Gastrocnemius medialis (tissue), 4 donors: ENCODE measurements at regions of chr12 and their contacts with region 1.

Region 1: GRCh38 chr12:51341259-51342007 is 5.0 kb downstream of the CELA1 start:
- DNase-seq: peak; percentile 35 to 57
- ATAC-seq: peak; percentile 87 to 89
- H3K4me3 ChIP-seq: peak overlapping the region in 3 of 4 donors; percentile 22 to 34 (median 34)
- H3K27ac ChIP-seq: peak overlapping the region in 1 of 4 donors; percentile 18
- H3K4me1 ChIP-seq: no peaks in the 10 kb centered on the region
- H3K27me3 ChIP-seq: no peaks in the 10 kb centered on the region
- CTCF ChIP-seq: peak; percentile 92 to 94 (median 94)
- POLR2A ChIP-seq: no peak

Region 2: DNA sequence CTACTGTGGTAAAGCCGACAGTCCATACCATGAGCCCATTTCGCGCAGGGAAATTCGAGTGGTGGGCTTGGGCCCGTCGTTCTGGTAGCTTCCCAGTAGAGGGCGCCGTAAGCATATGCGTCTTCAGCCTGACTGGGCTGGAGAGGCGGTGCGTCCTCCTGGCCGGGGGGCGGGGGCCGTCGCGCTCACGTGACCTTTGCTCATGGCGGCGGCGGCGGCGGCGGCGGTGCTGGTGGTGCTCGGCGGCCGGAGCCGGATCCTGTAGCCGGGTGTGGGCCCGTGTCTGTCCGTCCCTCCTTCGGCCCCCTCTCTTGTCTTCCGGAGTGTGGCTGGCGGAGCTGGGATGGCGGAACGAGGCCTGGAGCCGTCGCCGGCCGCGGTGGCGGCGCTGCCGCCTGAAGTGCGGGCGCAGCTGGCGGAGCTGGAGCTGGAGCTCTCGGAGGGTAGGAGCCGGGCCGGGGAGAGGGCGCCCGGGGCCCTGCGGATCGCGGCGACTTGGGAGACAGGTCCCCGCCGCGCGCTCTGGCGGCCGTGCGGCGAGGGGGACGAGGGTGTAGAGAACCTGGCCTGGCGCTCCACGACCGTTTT is 836.5 kb before region 1 on chr12 and contains the start of gene DIP2B:
- in situ Hi-C with region 1: no loop called
- intact Hi-C with region 1: loop called (anchors 2 kb)
- DNase-seq: peak; percentile 92 to 93
- ATAC-seq: peak; percentile 84 to 88
- H3K4me3 ChIP-seq: peak within 1 kb of the TSS; percentile 64 to 92 (median 82)
- H3K27ac ChIP-seq: peak within 1 kb of the TSS; percentile 90 to 97 (median 93)
- H3K4me1 ChIP-seq: peaks cover 39 to 47% of the 10 kb centered on the region in 2 donors
- H3K27me3 ChIP-seq: no peaks in the 10 kb centered on the region
- CTCF ChIP-seq: peak; percentile 85 to 98 (median 96)
- POLR2A ChIP-seq: peak; percentile 49 to 79
- total RNA-seq, gene DIP2B: 11.5 to 15.2 (median 12.2) TPM

Region 3: DNA sequence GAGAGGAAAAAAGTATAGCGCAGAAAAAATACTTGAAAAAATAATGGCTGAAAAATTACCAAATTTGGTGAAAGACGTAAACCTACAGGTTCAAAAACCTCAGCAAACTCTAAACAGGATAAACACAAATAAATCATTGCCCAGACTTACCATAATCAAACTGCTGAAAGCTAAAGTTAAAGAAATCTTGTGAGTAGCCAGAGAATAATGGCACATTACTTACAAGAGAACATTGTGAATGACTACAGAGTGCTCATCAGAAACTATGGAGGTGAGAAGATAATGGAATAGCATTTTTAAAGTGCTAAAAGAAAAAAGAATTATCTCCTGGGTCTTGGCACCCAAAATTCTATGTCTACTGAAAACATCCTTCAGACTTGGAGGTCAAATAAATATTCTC is 541.5 kb before region 1 on chr12:
- in situ Hi-C with region 1: loop called in 1 of 4 experiments (anchors 25 kb)
- intact Hi-C with region 1: no loop called
- DNase-seq: no peak
- ATAC-seq: no peak
- H3K4me3 ChIP-seq: no peak overlapping the region
- H3K27ac ChIP-seq: no peak overlapping the region
- H3K4me1 ChIP-seq: no peaks in the 10 kb centered on the region
- H3K27me3 ChIP-seq: no peaks in the 10 kb centered on the region
- CTCF ChIP-seq: no peak
- POLR2A ChIP-seq: no peak

Region 4: GRCh38 chr12:50825372-50825838 is 516.0 kb before region 1 on chr12:
- in situ Hi-C with region 1: loop called in 2 of 4 experiments (anchors 25 kb)
- intact Hi-C with region 1: no loop called
- DNase-seq: no peak
- ATAC-seq: peak; percentile 83 to 86
- H3K4me3 ChIP-seq: no peak overlapping the region
- H3K27ac ChIP-seq: peak overlapping the region; percentile 62 to 74 (median 70)
- H3K4me1 ChIP-seq: peaks cover 0 to 14% of the 10 kb centered on the region in 2 donors
- H3K27me3 ChIP-seq: no peaks in the 10 kb centered on the region
- CTCF ChIP-seq: peak; percentile 53 to 86 (median 66)
- POLR2A ChIP-seq: no peak

Region 5: GRCh38 chr12:51047655-51048540 is 293.5 kb before region 1 on chr12 and contains the start of gene LETMD1:
- in situ Hi-C with region 1: loop called in 2 of 4 experiments (anchors 10 kb)
- intact Hi-C with region 1: loop called (anchors 1 kb)
- DNase-seq: peak; percentile 97 to 98
- ATAC-seq: peak; percentile 99
- H3K4me3 ChIP-seq: peak within 1 kb of the TSS; percentile 79 to 95 (median 81)
- H3K27ac ChIP-seq: peak within 1 kb of the TSS; percentile 88 to 99 (median 98)
- H3K4me1 ChIP-seq: peaks cover 22 to 30% of the 10 kb centered on the region in 2 donors
- H3K27me3 ChIP-seq: no peaks in the 10 kb centered on the region
- CTCF ChIP-seq: peak; percentile 87 to 98 (median 92)
- POLR2A ChIP-seq: peak; percentile 77 to 79
- total RNA-seq, gene LETMD1: 22.5 to 42.4 (median 29.8) TPM

Region 6: GRCh38 chr12:51270067-51270970 is 71.1 kb before region 1 on chr12 and contains the start of gene SMAGP:
- in situ Hi-C with region 1: loop called in 2 of 4 experiments (anchors 5 to 10 kb)
- intact Hi-C with region 1: loop called (anchors 2 kb)
- DNase-seq: no peak
- ATAC-seq: peak; percentile 50 to 63
- H3K4me3 ChIP-seq: peak within 1 kb of the TSS; percentile 66 to 93 (median 73)
- H3K27ac ChIP-seq: peak within 1 kb of the TSS; percentile 35 to 74 (median 60)
- H3K4me1 ChIP-seq: peaks cover 0 to 6% of the 10 kb centered on the region in 2 donors
- H3K27me3 ChIP-seq: peaks cover 8 to 30% (median 15%) of the 10 kb centered on the region in 3 donors
- CTCF ChIP-seq: peak in 1 of 5 experiments; percentile 18
- POLR2A ChIP-seq: no peak
- total RNA-seq, gene SMAGP: 1.7 to 3.5 (median 2.5) TPM

Region 7: GRCh38 chr12:51307655-51308593 is 33.5 kb before region 1 on chr12:
- in situ Hi-C with region 1: no loop called
- intact Hi-C with region 1: no loop called
- DNase-seq: no peak
- ATAC-seq: no peak
- H3K4me3 ChIP-seq: no peak overlapping the region
- H3K27ac ChIP-seq: no peak overlapping the region
- H3K4me1 ChIP-seq: no peaks in the 10 kb centered on the region
- H3K27me3 ChIP-seq: no peaks in the 10 kb centered on the region
- CTCF ChIP-seq: no peak
- POLR2A ChIP-seq: no peak

Region 8: GRCh38 chr12:51357374-51358047 is 16.1 kb after region 1 on chr12:
- in situ Hi-C with region 1: no loop called
- intact Hi-C with region 1: no loop called
- DNase-seq: no peak
- ATAC-seq: no peak
- H3K4me3 ChIP-seq: no peak overlapping the region
- H3K27ac ChIP-seq: no peak overlapping the region
- H3K4me1 ChIP-seq: no peaks in the 10 kb centered on the region
- H3K27me3 ChIP-seq: no peaks in the 10 kb centered on the region
- CTCF ChIP-seq: no peak
- POLR2A ChIP-seq: no peak